ENCODE measurements at regions of chr17 and their contacts with region 1.

Region 1: GRCh38 chr17:5381542-5381941 is 37.9 kb downstream of the NUP88 start:
- DNase-seq: no peak
- CTCF ChIP-seq: no peak

Region 2: DNA sequence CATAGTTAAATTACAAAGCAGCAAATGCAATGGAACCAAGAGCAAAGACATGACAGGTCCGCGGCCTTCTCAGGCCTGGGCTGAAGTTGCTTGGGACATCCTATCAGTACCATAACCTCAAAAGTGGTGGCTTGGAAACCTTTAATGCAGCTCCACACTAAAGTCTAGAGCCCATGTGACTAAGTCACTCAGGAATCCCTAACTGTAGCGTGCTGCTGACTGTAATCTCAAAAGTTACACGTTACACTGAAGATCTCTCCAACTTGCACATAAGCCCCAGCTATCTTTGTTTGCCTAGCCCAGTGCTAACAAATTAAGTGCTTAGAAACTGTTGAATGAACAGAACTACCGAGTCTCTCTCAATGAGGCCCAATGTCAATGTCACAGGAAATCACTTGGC is 10.1 kb after region 1 on chr17:
- CTCF ChIA-PET with region 1: interaction called, 11 read pairs
- POLR2A ChIA-PET with region 1: no interaction called
- DNase-seq: no peak
- CTCF ChIP-seq: no peak

Measured in GM10248 (cell line).